CD4-positive, alpha-beta memory T cell (primary cell): ENCODE measurements at regions of chr12 and their contacts with region 1.

Region 1: GRCh38 chr12:104986022-104986941 is at the start of gene NOPCHAP1:
- DNase-seq: peak; percentile 73 to 84 (median 79)
- H3K4me3 ChIP-seq: peak within 1 kb of the TSS; percentile 68 to 80
- H3K4me3 Mint-ChIP-seq: peak within 1 kb of the TSS; percentile 88 to 94 (median 92)
- H3K27ac ChIP-seq: peak within 1 kb of the TSS; percentile 64
- H3K27ac Mint-ChIP-seq: peak within 1 kb of the TSS; percentile 59 to 94 (median 86)
- H3K4me1 ChIP-seq: peaks cover 28% of the 10 kb centered on the region
- H3K4me1 Mint-ChIP-seq: peaks cover 21 to 43% (median 27%) of the 10 kb centered on the region in 4 donors
- H3K27me3 ChIP-seq: no peaks in the 10 kb centered on the region
- H3K27me3 Mint-ChIP-seq: no peaks in the 10 kb centered on the region
- total RNA-seq, gene NOPCHAP1: 15.7 to 16.2 TPM

Region 2: DNA sequence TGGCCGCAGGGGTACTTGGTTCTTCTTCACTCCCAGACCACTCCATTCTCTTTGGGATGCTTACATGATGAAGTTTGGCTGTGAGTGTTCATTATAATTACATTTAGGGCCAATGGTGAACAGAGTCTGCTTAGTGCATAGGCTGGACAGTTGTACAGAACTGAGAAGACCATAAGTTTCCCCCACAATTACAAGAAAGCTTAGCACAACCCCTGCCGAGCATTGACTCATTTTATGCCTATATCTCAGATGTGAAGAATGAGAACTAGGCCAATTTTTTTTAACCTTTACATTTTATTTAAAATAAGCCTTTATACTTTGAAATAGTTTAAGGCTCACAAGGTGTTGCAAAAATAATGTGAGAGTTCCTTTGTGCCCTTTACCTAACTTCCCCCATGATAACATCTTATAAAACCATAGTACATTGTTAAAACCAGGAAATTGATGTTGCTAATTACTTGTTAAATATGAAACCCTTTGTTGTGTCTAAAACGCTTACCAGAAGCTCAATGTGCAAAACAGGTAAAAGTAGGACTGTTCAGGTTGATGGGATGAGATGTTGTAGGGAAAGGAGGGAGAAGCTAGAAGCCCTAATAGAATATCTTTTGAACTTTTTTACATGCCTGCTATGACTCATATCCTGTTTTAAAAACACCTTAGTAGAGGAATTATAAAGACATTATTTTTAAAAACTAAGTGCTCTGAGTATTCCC is 50.8 kb after region 1 on chr12:
- CTCF ChIA-PET with region 1: no interaction called
- POLR2A ChIA-PET with region 1: interaction called, 4 read pairs
- intact Hi-C with region 1: loop called (anchors 2 kb)
- DNase-seq: peak in 4 of 5 donors; percentile 10 to 35 (median 25)
- H3K4me3 ChIP-seq: no peak overlapping the region
- H3K4me3 Mint-ChIP-seq: peak overlapping the region; percentile 43 to 89 (median 76)
- H3K27ac ChIP-seq: peak overlapping the region; percentile 43
- H3K27ac Mint-ChIP-seq: peak overlapping the region; percentile 65 to 98 (median 94)
- H3K4me1 ChIP-seq: peaks cover 23% of the 10 kb centered on the region
- H3K4me1 Mint-ChIP-seq: peaks cover 21 to 42% (median 28%) of the 10 kb centered on the region in 4 donors
- H3K27me3 ChIP-seq: no peaks in the 10 kb centered on the region
- H3K27me3 Mint-ChIP-seq: no peaks in the 10 kb centered on the region